ENCODE measurements at regions of chr4 and their contacts with region 1.

Region 1: GRCh38 chr4:139554893-139555704 is 920 bp downstream of the SETD7 start:
- DNase-seq: peak; percentile 61 to 91 (median 86)
- H3K4me3 ChIP-seq: peak overlapping the region; percentile 76 to 99 (median 92)
- H3K27ac ChIP-seq: peak overlapping the region; percentile 83 to 99 (median 96)
- H3K27me3 ChIP-seq: no peaks in the 10 kb centered on the region
- CTCF ChIP-seq: peak in 10 of 56 donors; percentile 3 to 28 (median 13)

Region 2: GRCh38 chr4:139083956-139084803 is 470.9 kb before region 1 on chr4:
- intact Hi-C with region 1: loop called in 1 of 2 experiments (anchors 5 kb)
- DNase-seq: peak; percentile 69 to 91 (median 86)
- H3K4me3 ChIP-seq: peak overlapping the region; percentile 57 to 91 (median 81)
- H3K27ac ChIP-seq: peak overlapping the region; percentile 84 to 98 (median 94)
- H3K27me3 ChIP-seq: no peaks in the 10 kb centered on the region
- CTCF ChIP-seq: peak in 36 of 56 donors; percentile 2 to 46 (median 32)

Region 3: DNA sequence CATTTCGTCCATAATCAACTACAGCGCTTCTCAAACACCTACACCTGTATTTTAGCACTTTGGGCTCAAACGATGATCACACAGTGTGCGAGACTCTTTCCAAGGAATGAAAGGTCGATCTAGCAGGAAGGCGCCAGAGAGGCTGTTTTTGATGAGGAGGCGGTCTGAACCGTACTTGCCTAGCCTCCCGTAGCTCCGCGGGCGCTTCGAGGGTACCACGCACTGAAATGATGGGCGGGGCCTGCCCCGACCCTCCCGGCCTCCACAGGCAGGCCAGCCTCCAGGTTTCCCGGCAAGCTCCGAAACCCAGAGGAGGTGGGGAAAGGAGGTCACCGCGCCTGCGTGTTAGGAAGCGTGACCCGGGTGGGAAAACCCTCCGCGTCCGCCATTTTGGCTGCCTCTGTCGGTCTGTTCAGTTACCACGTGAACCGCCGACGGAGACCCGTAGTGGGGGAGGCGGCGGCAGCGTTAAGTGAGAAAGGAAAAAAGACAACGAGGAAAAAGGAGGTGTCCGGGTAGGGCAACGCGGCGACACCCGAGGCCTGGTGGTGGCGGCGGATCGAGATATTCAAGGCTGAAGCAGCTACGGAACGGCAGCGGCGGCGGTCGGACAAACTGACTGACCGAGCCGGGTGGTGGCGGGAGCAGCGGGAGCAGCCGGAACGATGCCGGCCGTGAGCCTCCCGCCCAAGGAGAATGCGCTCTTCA is 253.8 kb before region 1 on chr4 and contains the start of gene NAA15:
- intact Hi-C with region 1: loop called (anchors 10 kb)
- DNase-seq: peak; percentile 95 to 98 (median 96)
- H3K4me3 ChIP-seq: peak within 1 kb of the TSS; percentile 63 to 100 (median 95)
- H3K27ac ChIP-seq: peak within 1 kb of the TSS; percentile 40 to 96 (median 90)
- H3K27me3 ChIP-seq: no peaks in the 10 kb centered on the region
- CTCF ChIP-seq: peak in 42 of 56 donors; percentile 5 to 66 (median 34)
- total RNA-seq, gene NAA15: 28.2 to 47.1 (median 37.9) TPM

Region 4: GRCh38 chr4:139453371-139454110 is 101.6 kb before region 1 on chr4:
- intact Hi-C with region 1: loop called (anchors 2 kb)
- DNase-seq: peak; percentile 74 to 96 (median 92)
- H3K4me3 ChIP-seq: peak overlapping the region; percentile 62 to 97 (median 88)
- H3K27ac ChIP-seq: peak overlapping the region; percentile 69 to 99 (median 92)
- H3K27me3 ChIP-seq: no peaks in the 10 kb centered on the region
- CTCF ChIP-seq: peak in 24 of 56 donors; percentile 1 to 47 (median 16)

Region 5: GRCh38 chr4:139499026-139499585 is 56.0 kb before region 1 on chr4:
- intact Hi-C with region 1: loop called in 1 of 2 experiments (anchors 5 kb)
- DNase-seq: no peak
- H3K4me3 ChIP-seq: no peak overlapping the region
- H3K27ac ChIP-seq: no peak overlapping the region
- H3K27me3 ChIP-seq: no peaks in the 10 kb centered on the region
- CTCF ChIP-seq: no peak

Region 6: GRCh38 chr4:139522457-139522856 is 32.6 kb before region 1 on chr4:
- intact Hi-C with region 1: loop called in 1 of 2 experiments (anchors 5 kb)
- DNase-seq: no peak
- H3K4me3 ChIP-seq: peak overlapping the region in 1 of 59 donors; percentile 12
- H3K27ac ChIP-seq: peak overlapping the region in 48 of 59 donors; percentile 5 to 82 (median 59)
- H3K27me3 ChIP-seq: no peaks in the 10 kb centered on the region
- CTCF ChIP-seq: peak in 5 of 56 donors; percentile 7 to 17 (median 13)

Region 7: DNA sequence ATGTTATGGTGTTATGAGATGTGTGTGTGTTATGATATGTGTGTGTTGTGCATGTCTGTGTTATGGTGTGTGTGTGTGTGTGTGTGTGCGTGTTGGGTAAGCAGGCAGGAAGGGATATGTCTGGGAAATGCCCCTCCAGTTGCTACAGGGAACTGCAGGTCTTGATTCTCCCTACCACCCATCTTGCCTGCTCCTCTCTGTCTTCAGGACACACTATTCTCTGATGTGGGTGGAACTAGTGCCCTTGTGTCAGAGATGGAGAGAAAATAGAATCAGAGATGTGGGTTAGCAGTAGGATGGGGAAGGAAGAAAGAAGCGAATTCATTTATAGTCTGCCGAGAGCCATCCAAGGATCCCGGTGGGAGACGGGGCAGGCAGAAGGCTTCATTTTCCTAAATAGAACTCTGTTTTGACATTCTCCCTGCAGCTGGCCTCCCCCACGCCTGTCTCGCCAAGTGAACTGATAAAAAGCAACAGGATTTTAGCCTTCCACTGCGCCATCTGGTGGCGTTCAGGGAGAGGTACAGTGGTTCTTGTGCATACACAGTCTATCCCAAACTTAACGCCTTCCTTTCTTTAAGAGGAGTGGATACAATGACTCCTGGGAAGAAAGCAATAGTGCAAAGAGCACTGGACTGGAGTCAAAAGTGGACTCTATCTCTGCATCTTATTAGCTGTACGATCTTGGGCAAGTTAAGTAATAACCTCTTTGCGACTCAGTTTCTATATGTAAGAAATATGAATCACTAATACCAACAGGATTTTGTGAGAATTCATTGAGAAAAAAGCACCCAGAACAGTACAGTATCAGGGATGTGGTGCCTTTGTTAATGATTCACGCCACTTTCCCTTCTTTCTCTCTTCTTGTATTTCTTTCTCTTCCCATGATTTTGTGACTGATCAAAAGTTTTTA is 96.4 kb after region 1 on chr4:
- intact Hi-C with region 1: no loop called
- DNase-seq: peak; percentile 74 to 88 (median 82)
- H3K4me3 ChIP-seq: peak overlapping the region in 37 of 59 donors; percentile 15 to 54 (median 41)
- H3K27ac ChIP-seq: peak overlapping the region in 38 of 59 donors; percentile 5 to 79 (median 58)
- H3K27me3 ChIP-seq: no peaks in the 10 kb centered on the region
- CTCF ChIP-seq: peak; percentile 84 to 99 (median 95)

Region 8: DNA sequence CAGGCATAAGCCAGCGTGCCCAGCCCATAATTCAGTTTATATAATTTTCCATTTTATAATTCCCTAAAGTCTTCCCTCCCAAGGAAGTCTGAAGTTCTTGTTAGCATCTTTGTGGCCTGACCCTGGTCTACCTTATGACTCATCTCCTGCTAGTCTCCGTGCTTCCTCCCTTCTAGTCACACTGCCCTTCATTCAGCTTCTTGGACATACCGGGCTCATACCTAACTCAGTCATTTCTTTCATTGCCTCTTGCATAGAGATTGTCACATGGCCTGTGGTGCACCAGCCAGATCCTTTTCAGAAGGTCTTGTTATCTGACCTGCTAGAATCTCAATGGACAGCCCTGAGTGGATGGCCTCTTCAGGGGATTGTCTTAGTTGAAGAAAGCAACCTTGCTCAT is 621.6 kb after region 1 on chr4:
- intact Hi-C with region 1: no loop called
- DNase-seq: no peak
- H3K4me3 ChIP-seq: no peak overlapping the region
- H3K27ac ChIP-seq: no peak overlapping the region
- H3K27me3 ChIP-seq: peaks cover 0 to 3% (median 0%) of the 10 kb centered on the region in 45 donors
- CTCF ChIP-seq: no peak